KBM-7 (cell line): ENCODE measurements at regions of chr20 and their contacts with region 1.

Region 1: GRCh38 chr20:57108732-57109573 is 157.5 kb downstream of the BMP7 start:
- DNase-seq: no peak

Region 2: DNA sequence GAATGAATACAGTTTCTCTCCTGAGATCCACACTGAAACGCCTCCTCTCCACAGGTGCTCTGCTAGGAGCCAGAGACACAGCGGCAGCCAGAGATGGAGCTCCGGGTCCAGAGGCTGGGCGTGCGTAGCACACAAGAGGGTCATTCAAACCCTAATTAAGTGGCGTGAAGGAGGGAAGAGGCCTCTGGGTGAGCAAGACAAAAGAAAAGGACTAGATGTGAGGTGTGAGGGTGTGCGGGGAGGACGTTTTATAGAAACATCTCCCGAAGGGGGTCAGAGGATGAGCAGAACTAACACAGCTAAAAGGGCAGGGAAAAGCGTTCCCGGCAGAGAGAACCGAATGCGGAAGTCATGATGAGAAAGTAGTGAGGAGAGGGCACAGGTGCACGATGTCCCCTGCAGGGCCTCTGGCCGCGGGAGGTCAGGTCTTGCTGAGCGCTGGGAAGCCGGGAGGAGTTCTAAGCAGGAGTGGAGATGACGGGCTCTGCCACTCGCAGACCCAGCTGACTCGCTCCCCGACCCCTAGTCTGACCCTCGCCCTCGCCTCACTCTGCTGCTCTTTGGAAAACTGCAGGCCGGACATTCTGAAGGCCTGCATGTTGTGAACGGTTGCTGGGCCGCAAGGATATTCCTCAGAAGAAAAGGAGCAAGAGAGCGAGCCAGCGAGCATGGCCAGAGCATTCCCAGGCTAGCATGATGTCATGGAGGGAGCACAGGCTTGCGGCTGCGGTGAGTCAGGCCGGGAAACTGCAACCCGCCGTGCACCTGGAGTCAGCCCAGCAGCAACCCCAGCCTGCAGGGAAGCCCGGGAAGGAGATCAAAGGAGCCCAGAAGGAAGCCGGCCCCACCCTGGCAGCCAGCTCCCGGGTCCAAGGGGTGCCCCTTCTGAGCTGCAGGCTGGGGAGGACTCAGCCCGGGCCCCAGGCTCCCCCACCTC is 103.3 kb after region 1 on chr20:
- in situ Hi-C with region 1: loop called (anchors 25 kb)
- DNase-seq: no peak